ENCODE measurements at regions of chr19 and their contacts with region 1.

Region 1: DNA sequence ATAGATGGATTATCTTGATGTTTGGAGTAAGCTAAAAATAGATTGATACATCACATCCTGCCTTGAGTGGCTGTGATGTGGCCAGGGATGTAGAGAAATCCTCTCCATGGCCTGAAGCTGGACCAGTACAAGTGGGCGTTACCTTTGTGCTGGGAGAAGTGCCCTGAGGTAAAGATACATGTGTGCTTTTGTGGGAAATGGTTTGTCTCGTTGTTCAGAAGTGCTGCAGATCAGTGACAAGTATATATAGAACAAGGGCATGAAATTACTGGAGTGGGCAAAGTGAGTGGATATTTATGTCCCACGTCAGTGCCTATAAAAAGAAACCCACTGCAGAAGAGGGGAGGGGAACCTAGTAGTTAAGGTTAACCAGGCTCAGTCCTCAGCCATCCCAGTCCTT is 12.2 kb upstream of the ZNF304 start:
- DNase-seq: no peak
- H3K4me3 Mint-ChIP-seq: no peak overlapping the region
- H3K27ac Mint-ChIP-seq: no peak overlapping the region
- H3K4me1 Mint-ChIP-seq: no peaks in the 10 kb centered on the region
- H3K27me3 Mint-ChIP-seq: no peaks in the 10 kb centered on the region

Region 2: GRCh38 chr19:57421037-57421436 is 82.2 kb after region 1 on chr19:
- CTCF ChIA-PET with region 1: no interaction called
- POLR2A ChIA-PET with region 1: interaction called, 14 read pairs
- DNase-seq: no peak
- H3K4me3 Mint-ChIP-seq: no peak overlapping the region
- H3K27ac Mint-ChIP-seq: no peak overlapping the region
- H3K4me1 Mint-ChIP-seq: no peaks in the 10 kb centered on the region
- H3K27me3 Mint-ChIP-seq: no peaks in the 10 kb centered on the region

Measured in activated CD4-positive, alpha-beta T cell treated with anti-CD3 and anti-CD28 coated beads, Interleukin-2, amount 10 ng/mL, durations not matched to agents 7 days and 5 days (primary cell).